Tibial artery (tissue), 4 donors: ENCODE measurements at regions of chr11 and their contacts with region 1.

Region 1: DNA sequence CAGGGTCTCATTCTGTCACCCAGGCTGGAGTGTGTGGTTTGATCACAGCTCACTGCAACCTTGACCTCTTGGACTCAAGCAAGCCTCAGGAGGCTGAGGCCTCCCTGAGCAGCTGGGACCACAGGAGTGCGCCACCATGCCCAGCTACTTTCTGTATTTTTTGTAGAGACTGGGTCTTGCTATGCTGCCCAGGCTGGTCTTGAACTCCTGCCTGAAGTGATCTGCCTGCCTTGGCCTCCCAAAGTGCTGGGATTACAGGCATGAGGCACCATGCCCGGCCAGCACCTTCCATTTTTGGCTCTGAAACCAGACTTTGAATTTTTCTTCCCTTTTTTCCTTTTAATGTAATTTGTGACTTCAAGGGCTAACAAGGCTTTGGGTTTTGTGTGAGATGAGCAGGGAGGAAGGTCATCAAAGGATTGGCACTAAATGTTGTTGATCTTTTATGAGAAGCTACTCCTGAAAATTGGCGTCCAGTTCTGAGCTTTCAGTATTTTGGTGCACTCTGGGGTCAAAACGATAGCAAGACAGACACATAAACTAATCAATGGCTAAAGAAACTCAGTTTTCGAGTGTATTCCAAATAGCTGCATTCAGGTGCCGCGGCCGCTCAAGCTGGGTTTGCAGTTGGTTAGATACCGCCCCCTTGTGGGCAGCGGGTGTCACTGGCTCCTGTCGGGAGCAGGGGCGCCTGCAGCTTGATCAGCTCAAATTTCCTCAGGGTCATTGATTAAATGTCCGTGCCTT is 51.9 kb upstream of the CLMP start:
- DNase-seq: peak; percentile 80 to 82
- H3K4me3 ChIP-seq: no peak overlapping the region
- H3K27ac ChIP-seq: no peak overlapping the region
- H3K4me1 ChIP-seq: no peaks in the 10 kb centered on the region
- H3K27me3 ChIP-seq: peaks cover 0 to 6% of the 10 kb centered on the region in 2 donors
- CTCF ChIP-seq: peak; percentile 89 to 97

Region 2: GRCh38 chr11:123103326-123103980 is 143.5 kb before region 1 on chr11:
- intact Hi-C with region 1: loop called (anchors 5 kb)
- DNase-seq: peak; percentile 68 to 78
- H3K4me3 ChIP-seq: no peak overlapping the region
- H3K27ac ChIP-seq: peak overlapping the region in 1 of 2 donors; percentile 43
- H3K4me1 ChIP-seq: peaks cover 0 to 27% (median 12%) of the 10 kb centered on the region in 4 donors
- H3K27me3 ChIP-seq: no peaks in the 10 kb centered on the region
- CTCF ChIP-seq: peak; percentile 59 to 72